B cell (primary cell): ENCODE measurements at regions of chr5 and their contacts with region 1.

Region 1: GRCh38 chr5:177303121-177303924 is at the starts of genes PRELID1 and RAB24:
- DNase-seq: peak; percentile 91
- ATAC-seq: peak; percentile 59
- H3K4me3 ChIP-seq: peak within 1 kb of the TSS; percentile 71 to 97 (median 91)
- H3K4me3 Mint-ChIP-seq: peak within 1 kb of the TSS; percentile 95
- H3K27ac ChIP-seq: peak within 1 kb of the TSS; percentile 45 to 81
- H3K27ac Mint-ChIP-seq: peak within 1 kb of the TSS; percentile 93
- H3K4me1 ChIP-seq: peaks cover 60 to 79% of the 10 kb centered on the region in 2 donors
- H3K4me1 Mint-ChIP-seq: peaks cover 76% of the 10 kb centered on the region
- H3K27me3 ChIP-seq: no peaks in the 10 kb centered on the region
- H3K27me3 Mint-ChIP-seq: no peaks in the 10 kb centered on the region
- CTCF ChIP-seq: peak; percentile 64
- total RNA-seq, gene PRELID1: 66.5 and 71.7 TPM in 2 replicates
- total RNA-seq, gene RAB24: 38.3 and 39.7 TPM in 2 replicates

Region 2: DNA sequence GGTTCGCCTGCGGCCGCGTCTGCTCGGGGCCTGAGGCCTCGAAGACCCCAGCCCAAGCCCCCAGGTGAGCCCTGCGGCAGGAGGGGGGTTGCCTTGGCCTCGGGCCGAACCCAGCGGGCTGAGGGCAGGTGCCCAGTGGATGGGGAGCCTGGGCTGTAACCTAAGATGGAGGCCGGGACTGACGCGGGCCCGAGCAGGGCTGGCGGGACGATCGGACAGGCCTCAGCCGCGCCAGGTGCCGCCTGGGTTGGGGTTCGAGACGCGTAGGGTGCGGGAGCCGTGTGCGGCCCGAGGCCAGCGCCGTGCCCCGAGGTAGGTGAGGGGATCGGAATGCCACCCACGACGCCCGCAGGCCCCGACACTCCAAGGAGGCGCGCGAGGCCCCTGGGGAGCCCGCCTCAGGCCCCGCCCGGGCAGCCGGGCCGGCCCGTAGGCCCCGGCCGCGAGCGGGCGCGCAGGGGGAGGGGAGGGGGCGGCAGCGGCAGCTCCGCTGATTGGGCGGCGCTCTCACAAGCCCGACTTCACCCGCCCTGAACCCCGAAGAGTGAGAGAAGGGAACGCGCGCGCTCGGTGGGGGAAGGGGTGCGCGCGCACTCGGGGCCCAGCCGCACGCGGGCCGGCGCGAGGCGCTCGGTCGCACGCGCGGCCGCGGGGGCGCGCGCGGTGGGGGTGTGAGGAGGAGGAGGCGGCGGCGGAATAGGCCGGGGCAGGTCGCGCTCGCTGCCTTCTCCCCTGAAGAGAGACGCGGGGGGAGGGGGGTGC is 170.1 kb before region 1 on chr5 and contains the start of gene NSD1:
- CTCF ChIA-PET with region 1: no interaction called
- POLR2A ChIA-PET with region 1: interaction called, 3 read pairs
- intact Hi-C with region 1: loop called (anchors 2 kb)
- DNase-seq: peak; percentile 97
- ATAC-seq: peak; percentile 79
- H3K4me3 ChIP-seq: peak within 1 kb of the TSS; percentile 65 to 80 (median 74)
- H3K4me3 Mint-ChIP-seq: peak within 1 kb of the TSS; percentile 86
- H3K27ac ChIP-seq: peak within 1 kb of the TSS; percentile 91 to 92
- H3K27ac Mint-ChIP-seq: peak within 1 kb of the TSS; percentile 96
- H3K4me1 ChIP-seq: peaks cover 33 to 50% of the 10 kb centered on the region in 2 donors
- H3K4me1 Mint-ChIP-seq: peaks cover 45% of the 10 kb centered on the region
- H3K27me3 ChIP-seq: no peaks in the 10 kb centered on the region
- H3K27me3 Mint-ChIP-seq: no peaks in the 10 kb centered on the region
- CTCF ChIP-seq: no peak
- total RNA-seq, gene NSD1: 145 and 152 TPM in 2 replicates

Region 3: GRCh38 chr5:177344891-177345290 is 41.6 kb after region 1 on chr5:
- CTCF ChIA-PET with region 1: no interaction called
- POLR2A ChIA-PET with region 1: no interaction called
- intact Hi-C with region 1: no loop called
- DNase-seq: no peak
- ATAC-seq: no peak
- H3K4me3 ChIP-seq: no peak overlapping the region
- H3K4me3 Mint-ChIP-seq: no peak overlapping the region
- H3K27ac ChIP-seq: no peak overlapping the region
- H3K27ac Mint-ChIP-seq: no peak overlapping the region
- H3K4me1 ChIP-seq: peaks cover 8 to 9% of the 10 kb centered on the region in 2 donors
- H3K4me1 Mint-ChIP-seq: peaks cover 25% of the 10 kb centered on the region
- H3K27me3 ChIP-seq: no peaks in the 10 kb centered on the region
- H3K27me3 Mint-ChIP-seq: no peaks in the 10 kb centered on the region
- CTCF ChIP-seq: no peak

Region 4: GRCh38 chr5:177509381-177509951 is 206.1 kb after region 1 on chr5 and contains the start of gene DOK3:
- CTCF ChIA-PET with region 1: no interaction called
- POLR2A ChIA-PET with region 1: no interaction called
- intact Hi-C with region 1: loop called (anchors 5 kb)
- DNase-seq: peak; percentile 81
- ATAC-seq: peak; percentile 39
- H3K4me3 ChIP-seq: peak within 1 kb of the TSS; percentile 57 to 95 (median 75)
- H3K4me3 Mint-ChIP-seq: peak within 1 kb of the TSS; percentile 94
- H3K27ac ChIP-seq: peak within 1 kb of the TSS; percentile 91 to 96
- H3K27ac Mint-ChIP-seq: peak within 1 kb of the TSS; percentile 98
- H3K4me1 ChIP-seq: peaks cover 38 to 53% of the 10 kb centered on the region in 2 donors
- H3K4me1 Mint-ChIP-seq: peaks cover 55% of the 10 kb centered on the region
- H3K27me3 ChIP-seq: no peaks in the 10 kb centered on the region
- H3K27me3 Mint-ChIP-seq: no peaks in the 10 kb centered on the region
- CTCF ChIP-seq: no peak
- total RNA-seq, gene DOK3: 113 and 115 TPM in 2 replicates

Region 5: GRCh38 chr5:177599731-177600507 is 296.6 kb after region 1 on chr5 and contains the start of gene B4GALT7:
- CTCF ChIA-PET with region 1: no interaction called
- POLR2A ChIA-PET with region 1: no interaction called
- intact Hi-C with region 1: loop called (anchors 5 kb)
- DNase-seq: peak; percentile 88
- ATAC-seq: peak; percentile 88
- H3K4me3 ChIP-seq: peak within 1 kb of the TSS; percentile 61 to 87 (median 81)
- H3K4me3 Mint-ChIP-seq: peak within 1 kb of the TSS; percentile 95
- H3K27ac ChIP-seq: peak within 1 kb of the TSS; percentile 74 to 94
- H3K27ac Mint-ChIP-seq: peak within 1 kb of the TSS; percentile 94
- H3K4me1 ChIP-seq: peaks cover 13 to 27% of the 10 kb centered on the region in 2 donors
- H3K4me1 Mint-ChIP-seq: peaks cover 29% of the 10 kb centered on the region
- H3K27me3 ChIP-seq: no peaks in the 10 kb centered on the region
- H3K27me3 Mint-ChIP-seq: no peaks in the 10 kb centered on the region
- CTCF ChIP-seq: no peak
- total RNA-seq, gene B4GALT7: 38.9 and 41.8 TPM in 2 replicates